Upper lobe of right lung (tissue), 1 donor: ENCODE measurements at regions of chr13 and their contacts with region 1.

Region 1: DNA sequence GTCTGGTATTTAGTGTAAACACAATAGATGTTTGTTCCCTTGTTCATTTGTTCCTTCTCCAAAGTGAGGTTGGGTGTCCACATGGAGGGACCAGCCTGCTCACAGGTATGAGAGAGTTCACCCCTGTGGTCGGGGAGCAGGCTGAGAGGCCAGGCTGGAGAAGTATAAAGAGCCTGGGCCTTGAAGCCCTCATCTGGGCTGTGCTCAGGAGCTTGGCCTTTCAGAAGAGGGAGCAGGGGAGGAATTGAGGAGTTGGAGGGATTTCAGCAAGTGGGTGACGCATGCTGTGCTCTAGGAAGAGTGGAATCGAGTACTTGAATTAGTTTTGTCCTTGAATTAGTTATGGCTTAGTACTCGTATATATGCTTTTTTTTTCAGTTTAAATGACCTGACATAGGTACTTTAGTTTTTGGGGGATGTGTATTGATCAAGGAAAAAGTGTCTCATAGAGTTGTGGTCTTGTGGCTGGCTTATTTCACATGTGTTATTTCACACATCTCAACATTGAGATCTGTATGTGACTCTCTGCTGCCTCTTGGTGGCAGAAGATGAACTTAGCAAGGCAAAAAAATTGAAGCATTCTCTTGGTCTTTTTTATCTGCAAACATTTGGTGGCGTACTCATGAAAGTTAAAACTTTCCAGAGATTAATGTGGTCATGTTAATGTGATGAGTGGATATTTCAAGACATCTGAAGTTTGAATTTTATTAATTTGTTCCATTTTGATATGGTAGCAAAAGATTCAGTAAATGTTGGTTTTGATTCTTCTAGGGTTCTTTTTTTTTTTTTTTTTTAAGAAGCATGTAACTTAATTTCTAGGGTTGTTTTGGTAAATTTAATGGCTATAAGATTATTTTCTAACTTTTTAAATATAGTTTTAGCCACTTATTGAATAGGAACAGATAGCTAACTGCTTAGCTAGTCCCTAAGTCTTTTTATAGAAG is 54.3 kb downstream of the SLAIN1 start:
- DNase-seq: no peak
- ATAC-seq: peak; percentile 88
- H3K4me3 ChIP-seq: no peak overlapping the region
- H3K27ac ChIP-seq: no peak overlapping the region
- H3K4me1 ChIP-seq: peaks cover 4% of the 10 kb centered on the region
- H3K27me3 ChIP-seq: no peaks in the 10 kb centered on the region
- CTCF ChIP-seq: peak; percentile 81

Region 2: GRCh38 chr13:77599351-77599750 is 152.4 kb before region 1 on chr13:
- intact Hi-C with region 1: loop called (anchors 5 kb)
- DNase-seq: no peak
- ATAC-seq: no peak
- H3K4me3 ChIP-seq: no peak overlapping the region
- H3K27ac ChIP-seq: no peak overlapping the region
- H3K4me1 ChIP-seq: no peaks in the 10 kb centered on the region
- H3K27me3 ChIP-seq: no peaks in the 10 kb centered on the region
- CTCF ChIP-seq: no peak

Region 3: GRCh38 chr13:78098249-78098648 is 346.5 kb after region 1 on chr13:
- intact Hi-C with region 1: no loop called
- DNase-seq: no peak
- ATAC-seq: no peak
- H3K4me3 ChIP-seq: no peak overlapping the region
- H3K27ac ChIP-seq: no peak overlapping the region
- H3K4me1 ChIP-seq: no peaks in the 10 kb centered on the region
- H3K27me3 ChIP-seq: no peaks in the 10 kb centered on the region
- CTCF ChIP-seq: no peak